Transverse colon (tissue), 4 donors: ENCODE measurements at regions of chr3 and their contacts with region 1.

Region 1: GRCh38 chr3:11509173-11510000 is 134.3 kb downstream of the VGLL4 start:
- DNase-seq: peak; percentile 63
- H3K4me3 ChIP-seq: no peak overlapping the region
- H3K27ac ChIP-seq: peak overlapping the region; percentile 63 to 80 (median 73)
- H3K4me1 ChIP-seq: peaks cover 26 to 42% (median 28%) of the 10 kb centered on the region in 4 donors
- H3K27me3 ChIP-seq: no peaks in the 10 kb centered on the region
- CTCF ChIP-seq: peak in 1 of 5 experiments; percentile 31
- EP300 ChIP-seq: no peak
- POLR2A ChIP-seq: no peak

Region 2: GRCh38 chr3:11379233-11379823 is 130.1 kb before region 1 on chr3:
- in situ Hi-C with region 1: loop called in 1 of 4 experiments (anchors 25 kb)
- intact Hi-C with region 1: no loop called
- DNase-seq: no peak
- H3K4me3 ChIP-seq: no peak overlapping the region
- H3K27ac ChIP-seq: peak overlapping the region in 3 of 4 donors; percentile 1 to 40 (median 37)
- H3K4me1 ChIP-seq: peaks cover 0 to 11% (median 3%) of the 10 kb centered on the region in 4 donors
- H3K27me3 ChIP-seq: no peaks in the 10 kb centered on the region
- CTCF ChIP-seq: peak; percentile 55 to 69 (median 58)
- EP300 ChIP-seq: no peak
- POLR2A ChIP-seq: no peak

Region 3: DNA sequence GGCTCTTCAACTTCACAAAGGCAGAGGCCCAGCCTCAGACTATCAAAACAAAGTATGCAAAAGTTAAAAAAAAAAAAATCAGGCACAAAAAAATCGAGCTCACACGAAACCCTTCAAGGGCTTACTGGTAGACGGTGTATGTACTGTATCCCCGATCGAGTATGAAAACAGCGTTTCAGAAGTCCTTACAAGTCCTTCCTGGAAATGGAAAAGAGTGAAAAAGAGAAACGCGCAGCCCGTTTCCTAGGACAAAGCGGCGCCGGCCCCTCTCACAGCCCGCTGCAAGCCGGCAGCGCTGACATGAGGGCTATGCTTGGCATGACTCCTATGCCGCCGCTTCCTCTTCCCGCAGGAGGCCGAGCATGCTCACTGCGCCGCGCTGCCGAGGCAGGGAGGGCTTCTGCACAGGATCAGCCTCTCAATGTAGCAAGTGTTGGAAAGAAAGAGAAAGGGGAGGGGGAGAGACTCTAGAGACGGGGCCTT is 134.3 kb after region 1 on chr3 and contains the start of gene VGLL4:
- in situ Hi-C with region 1: no loop called
- intact Hi-C with region 1: no loop called
- DNase-seq: peak; percentile 86
- H3K4me3 ChIP-seq: peak within 1 kb of the TSS; percentile 51 to 71 (median 60)
- H3K27ac ChIP-seq: peak within 1 kb of the TSS; percentile 92 to 96 (median 94)
- H3K4me1 ChIP-seq: peaks cover 5 to 36% (median 25%) of the 10 kb centered on the region in 4 donors
- H3K27me3 ChIP-seq: no peaks in the 10 kb centered on the region
- CTCF ChIP-seq: peak in 1 of 5 experiments; percentile 8
- EP300 ChIP-seq: peak; percentile 63
- POLR2A ChIP-seq: peak; percentile 64
- total RNA-seq, gene VGLL4: 67.3 to 175 (median 95.0) TPM